Adrenal gland (tissue), 19 donors: ENCODE measurements at regions of chr20 and their contacts with region 1.

Region 1: DNA sequence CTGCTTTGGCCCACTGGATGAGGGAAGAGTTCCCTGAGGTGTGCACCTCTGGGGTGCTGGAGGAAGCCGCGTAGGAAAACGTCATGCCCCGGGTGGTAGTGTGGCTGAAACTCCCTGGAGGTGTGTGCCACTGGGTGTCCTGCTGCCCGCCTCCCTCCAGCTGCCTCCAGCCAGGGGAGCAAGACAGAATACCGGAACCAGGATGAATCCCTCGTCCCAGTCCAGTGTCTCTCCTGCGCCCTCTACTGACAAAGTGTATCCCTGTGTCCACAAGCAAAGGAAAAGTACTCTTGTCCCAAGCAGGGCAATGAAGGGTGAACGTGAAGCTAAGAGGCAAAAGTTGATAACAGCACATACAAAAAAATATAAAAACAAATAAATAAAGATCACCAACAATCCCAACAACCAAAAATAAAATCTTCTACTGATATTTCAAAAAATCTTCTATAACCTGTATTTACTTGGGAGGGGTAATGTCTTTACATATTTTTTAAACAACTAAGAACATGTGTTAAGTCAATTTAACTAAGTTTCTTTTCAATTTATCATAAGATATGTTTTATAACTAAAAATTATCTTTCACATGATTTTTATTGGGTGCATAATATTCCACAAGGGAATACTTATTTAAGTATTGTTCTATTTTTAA is 437.6 kb downstream of the MAFB start:
- DNase-seq: peak; percentile 26 to 71 (median 62)
- H3K4me3 ChIP-seq: no peak overlapping the region
- H3K27ac ChIP-seq: no peak overlapping the region
- H3K4me1 ChIP-seq: no peaks in the 10 kb centered on the region
- H3K27me3 ChIP-seq: no peaks in the 10 kb centered on the region
- CTCF ChIP-seq: peak; percentile 35 to 64 (median 50)
- POLR2A ChIP-seq: no peak

Region 2: DNA sequence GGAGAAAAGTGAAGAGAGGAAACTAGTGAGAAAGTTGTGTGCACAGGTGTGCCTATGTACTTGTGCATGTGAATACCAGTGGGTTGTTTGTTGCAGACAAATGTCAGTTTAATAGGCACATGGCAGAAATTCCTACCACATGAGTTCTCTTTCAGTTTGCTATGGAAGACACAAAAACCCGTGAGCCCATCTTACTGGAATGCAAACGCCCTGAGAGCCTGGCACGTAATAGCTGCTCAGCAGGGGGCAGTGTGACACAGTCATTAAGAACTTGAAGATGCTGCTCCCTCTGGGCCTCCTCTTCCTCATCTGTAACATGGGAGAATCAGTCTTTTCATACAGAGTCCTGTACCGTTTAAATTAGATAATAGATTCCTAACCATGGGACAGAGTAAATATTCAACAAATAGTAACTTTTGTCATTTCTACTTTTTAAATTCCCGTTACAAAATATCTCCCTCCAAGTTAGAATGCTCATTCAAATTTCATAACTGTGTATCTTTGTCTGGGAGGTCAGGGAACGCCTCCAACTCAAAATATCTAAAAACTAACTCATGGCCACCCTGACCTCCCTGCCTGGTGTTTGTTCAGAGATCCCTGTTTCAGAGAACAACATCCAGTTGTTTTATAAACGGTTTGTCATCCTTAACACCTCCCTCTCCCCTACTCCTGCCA is 365.3 kb before region 1 on chr20:
- intact Hi-C with region 1: loop called in 1 of 2 experiments (anchors 5 kb)
- DNase-seq: peak; percentile 66 to 93 (median 80)
- H3K4me3 ChIP-seq: no peak overlapping the region
- H3K27ac ChIP-seq: peak overlapping the region in 1 of 5 donors; percentile 51
- H3K4me1 ChIP-seq: peaks cover 0 to 5% of the 10 kb centered on the region in 2 donors
- H3K27me3 ChIP-seq: no peaks in the 10 kb centered on the region
- CTCF ChIP-seq: peak; percentile 51 to 81 (median 76)
- POLR2A ChIP-seq: no peak

Region 3: DNA sequence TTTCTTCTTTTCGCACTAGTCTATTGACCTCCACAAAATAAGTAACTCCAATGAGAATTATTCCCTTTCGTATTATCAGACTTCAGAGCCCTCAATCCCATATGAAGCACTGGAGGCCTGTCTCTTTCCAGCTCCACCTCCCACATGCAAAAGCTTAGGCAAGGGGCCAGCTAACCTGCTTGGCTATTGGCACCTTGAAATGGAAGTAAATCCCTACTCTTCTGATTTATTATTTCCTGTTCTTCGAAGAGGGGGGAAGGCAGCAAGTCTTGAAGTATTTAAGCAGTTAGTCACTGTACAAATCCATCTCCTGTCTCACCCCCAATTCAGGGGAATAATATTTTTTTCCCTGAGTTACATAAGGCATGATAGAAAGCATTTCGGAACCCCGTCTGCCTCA is 140.1 kb before region 1 on chr20:
- intact Hi-C with region 1: no loop called
- DNase-seq: no peak
- H3K4me3 ChIP-seq: no peak overlapping the region
- H3K27ac ChIP-seq: no peak overlapping the region
- H3K4me1 ChIP-seq: no peaks in the 10 kb centered on the region
- H3K27me3 ChIP-seq: no peaks in the 10 kb centered on the region
- CTCF ChIP-seq: no peak
- POLR2A ChIP-seq: no peak

Region 4: GRCh38 chr20:40293740-40294139 is 42.3 kb after region 1 on chr20:
- intact Hi-C with region 1: no loop called
- DNase-seq: no peak
- H3K4me3 ChIP-seq: no peak overlapping the region
- H3K27ac ChIP-seq: peak overlapping the region in 1 of 5 donors; percentile 14
- H3K4me1 ChIP-seq: no peaks in the 10 kb centered on the region
- H3K27me3 ChIP-seq: no peaks in the 10 kb centered on the region
- CTCF ChIP-seq: no peak
- POLR2A ChIP-seq: no peak